ENCODE measurements at regions of chr2 and their contacts with region 1.

Region 1: DNA sequence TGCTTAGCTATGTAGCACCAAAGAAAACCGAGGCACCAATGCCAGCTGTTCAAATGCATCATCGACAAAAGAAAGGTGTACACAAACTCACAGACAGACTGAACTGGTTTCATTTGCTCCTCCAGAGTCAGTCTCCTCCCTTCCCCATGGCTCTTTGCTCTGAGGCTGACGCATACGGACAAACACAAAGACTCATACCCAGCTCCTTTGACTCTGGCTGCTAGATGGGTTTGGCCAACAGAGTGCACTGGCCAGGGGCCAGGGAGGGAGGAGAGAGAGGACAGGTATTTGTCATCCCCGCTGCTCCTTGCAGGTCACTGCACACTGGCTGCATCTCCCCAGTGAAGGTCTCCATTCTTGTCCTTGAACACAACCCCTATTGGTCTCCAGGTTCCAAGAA is 40.7 kb downstream of the DNER start:
- DNase-seq: no peak

Region 2: GRCh38 chr2:229370509-229370908 is 303.2 kb before region 1 on chr2:
- intact Hi-C with region 1: no loop called
- DNase-seq: no peak

Region 3: DNA sequence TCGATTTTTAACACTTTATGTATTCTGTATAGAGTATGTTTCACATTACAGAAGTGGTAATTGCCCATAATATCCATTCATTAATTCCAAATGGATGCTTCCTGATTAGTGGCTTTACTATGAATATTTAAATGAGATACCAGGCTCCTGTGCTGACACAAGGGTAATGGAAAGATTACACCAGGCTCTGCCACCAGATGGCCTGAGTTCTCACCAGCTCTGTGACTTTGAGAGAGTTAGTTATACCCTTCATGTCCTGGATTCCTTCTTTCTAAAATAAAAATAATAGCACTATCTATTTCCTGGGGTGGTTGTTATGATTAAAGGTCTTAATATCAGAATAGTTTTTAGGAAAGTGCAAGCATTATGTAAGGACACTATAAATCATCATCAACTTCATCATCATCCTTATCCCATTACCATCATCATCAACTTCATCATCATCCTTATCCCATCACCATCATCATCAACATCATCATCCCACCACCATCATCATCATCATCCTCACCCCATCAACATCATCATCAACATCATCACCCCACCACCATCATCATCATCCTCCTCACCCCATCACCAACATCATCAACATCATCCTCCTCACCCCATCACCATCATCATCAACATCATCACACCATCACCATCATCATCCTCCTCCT is 111.1 kb before region 1 on chr2:
- intact Hi-C with region 1: no loop called
- DNase-seq: no peak

Region 4: GRCh38 chr2:229708335-229708734 is 34.7 kb after region 1 on chr2:
- intact Hi-C with region 1: loop called (anchors 5 kb)
- DNase-seq: no peak

Measured in posterior cingulate gyrus (tissue), 11 donors.